A549 (cell line): ENCODE measurements at regions of chr4 and their contacts with region 1.

Region 1: GRCh38 chr4:8176547-8177399 is 18.2 kb upstream of the ABLIM2 start:
- DNase-seq: peak; percentile 60 to 73
- ATAC-seq: peak; percentile 90 to 97
- H3K4me3 ChIP-seq: no peak overlapping the region
- H3K27ac ChIP-seq: peak overlapping the region in 1 of 2 experiments; percentile 57; a peak in 2 of 6 replicates
- H3K4me1 ChIP-seq: peaks cover 8% of the 10 kb centered on the region
- CTCF ChIP-seq: peak; percentile 69
- EP300 ChIP-seq: no peak
- POLR2A ChIP-seq: no peak
- RAD21 ChIP-seq: peak; percentile 77 to 88

Region 2: GRCh38 chr4:8158710-8159536 is 17.9 kb before region 1 on chr4 and contains the start of gene ABLIM2:
- CTCF ChIA-PET with region 1: interaction called, 11 read pairs
- POLR2A ChIA-PET with region 1: no interaction called
- DNase-seq: peak; percentile 45 to 95
- ATAC-seq: peak; percentile 87 to 97
- H3K4me3 ChIP-seq: peak within 1 kb of the TSS; percentile 54
- H3K27ac ChIP-seq: peak within 1 kb of the TSS; percentile 66 to 84
- H3K4me1 ChIP-seq: peaks cover 3% of the 10 kb centered on the region; the same call in 1 of the 3 replicates
- CTCF ChIP-seq: no peak
- EP300 ChIP-seq: no peak
- POLR2A ChIP-seq: peak; percentile 73
- RAD21 ChIP-seq: no peak
- polyA plus RNA-seq, gene ABLIM2: 0.21 and 0.37 TPM in 2 replicates

Region 3: DNA sequence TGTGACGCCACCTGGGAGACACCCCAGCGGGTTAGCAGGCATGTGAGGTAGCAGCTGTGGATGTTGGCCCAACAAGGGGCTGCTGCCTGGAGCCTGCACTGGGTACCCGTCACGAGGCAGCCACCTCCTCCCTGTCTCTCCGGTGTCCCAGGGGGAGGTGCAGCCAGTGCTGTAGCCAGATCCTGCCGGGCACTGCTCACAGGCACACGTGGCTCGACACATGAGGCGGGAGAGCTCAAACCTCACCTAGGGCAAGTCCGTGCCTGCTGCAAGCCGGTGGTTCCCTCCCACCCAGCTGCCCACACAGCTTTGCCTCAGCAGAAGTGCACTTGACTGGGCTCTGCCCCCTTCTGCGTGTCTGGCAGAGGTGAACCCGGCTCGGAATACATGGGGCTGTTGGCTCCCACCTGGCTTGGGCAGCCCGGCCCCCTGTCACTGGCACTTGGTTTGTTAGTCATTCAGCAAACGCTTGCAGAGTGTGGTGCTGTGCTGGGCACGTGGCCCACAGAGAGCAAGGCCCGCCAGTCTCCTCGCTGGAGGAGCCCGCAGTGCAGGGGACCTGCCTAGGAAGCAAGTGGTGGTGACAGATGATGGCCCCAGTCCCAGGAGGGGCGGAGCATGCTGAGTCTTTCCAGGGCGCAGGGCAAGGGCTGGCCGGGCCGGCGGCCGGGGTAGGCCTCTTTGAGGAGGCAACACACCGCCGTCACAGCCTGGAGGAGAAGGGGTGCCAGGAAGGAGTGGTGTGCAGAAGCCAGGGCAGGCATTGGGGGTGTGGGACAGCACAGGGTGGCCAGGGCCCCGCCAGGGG is 12.2 kb after region 1 on chr4:
- CTCF ChIA-PET with region 1: interaction called, 122 read pairs
- POLR2A ChIA-PET with region 1: no interaction called
- DNase-seq: no peak
- ATAC-seq: no peak
- H3K4me3 ChIP-seq: no peak overlapping the region
- H3K27ac ChIP-seq: peak overlapping the region in 1 of 2 experiments; percentile 66; a peak in 3 of 6 replicates
- H3K4me1 ChIP-seq: peaks cover 45% of the 10 kb centered on the region
- CTCF ChIP-seq: no peak
- EP300 ChIP-seq: no peak
- POLR2A ChIP-seq: no peak
- RAD21 ChIP-seq: no peak

Region 4: GRCh38 chr4:8198906-8199593 is 22.3 kb after region 1 on chr4 and contains the start of gene SH3TC1:
- CTCF ChIA-PET with region 1: interaction called, 122 read pairs
- POLR2A ChIA-PET with region 1: no interaction called
- DNase-seq: peak; percentile 76 to 86
- ATAC-seq: peak; percentile 96
- H3K4me3 ChIP-seq: peak within 1 kb of the TSS; percentile 50
- H3K27ac ChIP-seq: peak within 1 kb of the TSS; percentile 87 to 95
- H3K4me1 ChIP-seq: peaks cover 27% of the 10 kb centered on the region
- CTCF ChIP-seq: no peak
- EP300 ChIP-seq: no peak
- POLR2A ChIP-seq: no peak; the same call in 1 of the 2 replicates
- RAD21 ChIP-seq: no peak
- polyA plus RNA-seq, gene SH3TC1: 2.8 and 3.3 TPM in 2 replicates

Region 5: GRCh38 chr4:8228319-8229250 is 51.8 kb after region 1 on chr4:
- CTCF ChIA-PET with region 1: interaction called, 19 read pairs
- POLR2A ChIA-PET with region 1: no interaction called
- DNase-seq: peak; percentile 26 to 82
- ATAC-seq: peak; percentile 57 to 70; a peak in 5 of 6 replicates
- H3K4me3 ChIP-seq: no peak overlapping the region
- H3K27ac ChIP-seq: peak overlapping the region; percentile 84 to 97
- H3K4me1 ChIP-seq: peaks cover 35% of the 10 kb centered on the region
- CTCF ChIP-seq: no peak
- EP300 ChIP-seq: 0 out of 5 replicates have a peak, but pooled peaks of 1 of the 2 experiments have one; percentile 31
- POLR2A ChIP-seq: no peak
- RAD21 ChIP-seq: no peak

Region 6: GRCh38 chr4:8241895-8242696 is 65.3 kb after region 1 on chr4:
- CTCF ChIA-PET with region 1: interaction called, 23 read pairs
- POLR2A ChIA-PET with region 1: no interaction called
- DNase-seq: peak; percentile 73 to 76
- ATAC-seq: peak; percentile 80 to 92
- H3K4me3 ChIP-seq: no peak overlapping the region
- H3K27ac ChIP-seq: peak overlapping the region; percentile 45 to 82; a peak in 5 of 6 replicates
- H3K4me1 ChIP-seq: peaks cover 20% of the 10 kb centered on the region
- CTCF ChIP-seq: peak; percentile 72
- EP300 ChIP-seq: no peak
- POLR2A ChIP-seq: no peak
- RAD21 ChIP-seq: peak; percentile 86 to 89

Region 7: GRCh38 chr4:8410641-8411271 is 234.0 kb after region 1 on chr4:
- CTCF ChIA-PET with region 1: interaction called, 29 read pairs
- POLR2A ChIA-PET with region 1: no interaction called
- DNase-seq: peak; percentile 57 to 80
- ATAC-seq: peak; percentile 91 to 93
- H3K4me3 ChIP-seq: no peak overlapping the region
- H3K27ac ChIP-seq: no peak overlapping the region
- H3K4me1 ChIP-seq: 0 out of 3 replicates have a peak, but pooled peaks cover 6% of the 10 kb centered on the region
- CTCF ChIP-seq: peak; percentile 35
- EP300 ChIP-seq: no peak
- POLR2A ChIP-seq: no peak
- RAD21 ChIP-seq: peak; percentile 47 to 59